ENCODE measurements at regions of chr12 and their contacts with region 1.

Region 1: GRCh38 chr12:31959161-31959700 is at the start of gene RESF1:
- DNase-seq: peak; percentile 82
- ATAC-seq: peak; percentile 87
- H3K4me3 Mint-ChIP-seq: peak within 1 kb of the TSS; percentile 99
- H3K27ac Mint-ChIP-seq: peak within 1 kb of the TSS; percentile 99
- H3K4me1 Mint-ChIP-seq: peaks cover 76% of the 10 kb centered on the region
- H3K27me3 Mint-ChIP-seq: no peaks in the 10 kb centered on the region
- CTCF ChIP-seq: no peak
- total RNA-seq, gene RESF1: 286 and 299 TPM in 2 replicates

Region 2: DNA sequence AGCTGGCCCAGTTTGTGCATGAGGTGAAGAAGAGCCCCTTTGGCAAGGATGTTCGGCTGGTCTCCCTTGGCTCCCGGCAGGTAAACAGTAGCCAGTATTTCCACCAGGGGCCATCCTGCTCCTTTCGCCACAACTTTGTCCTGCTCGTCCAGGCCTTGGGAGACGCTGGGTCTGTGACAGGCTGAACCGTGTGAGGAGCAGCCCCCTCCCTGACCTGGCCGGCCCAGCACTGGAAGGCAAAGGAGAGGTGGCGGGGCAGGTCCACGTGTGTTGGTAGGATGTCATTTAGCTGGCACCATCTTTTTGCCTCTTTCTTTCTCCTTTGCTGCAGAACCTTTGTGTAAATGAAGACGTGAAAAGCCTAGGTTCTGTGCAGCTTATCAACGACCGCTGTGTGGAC is 870.2 kb before region 1 on chr12:
- CTCF ChIA-PET with region 1: no interaction called
- POLR2A ChIA-PET with region 1: no interaction called
- intact Hi-C with region 1: no loop called
- DNase-seq: no peak
- ATAC-seq: no peak
- H3K4me3 Mint-ChIP-seq: no peak overlapping the region
- H3K27ac Mint-ChIP-seq: no peak overlapping the region
- H3K4me1 Mint-ChIP-seq: no peaks in the 10 kb centered on the region
- H3K27me3 Mint-ChIP-seq: no peaks in the 10 kb centered on the region
- CTCF ChIP-seq: no peak

Region 3: DNA sequence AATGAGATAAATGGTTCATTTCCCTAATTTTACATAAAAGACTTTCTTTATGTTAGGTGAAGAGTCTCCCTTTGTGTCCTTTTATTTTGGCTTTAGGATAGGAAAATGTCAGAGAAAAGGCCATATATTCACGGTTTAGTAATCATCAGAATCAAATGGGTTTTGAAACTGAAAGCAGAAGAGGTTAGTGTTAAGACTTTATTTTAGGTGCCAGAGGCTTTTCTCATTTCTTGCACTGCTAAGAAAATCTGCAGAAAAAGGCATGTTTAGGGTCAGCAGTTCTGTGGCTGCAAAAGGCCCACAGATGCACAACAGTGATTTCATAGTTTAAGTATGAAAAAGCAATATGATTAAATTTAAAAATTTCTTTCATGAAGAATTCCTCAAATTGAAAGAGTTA is 552.9 kb before region 1 on chr12:
- CTCF ChIA-PET with region 1: no interaction called
- POLR2A ChIA-PET with region 1: no interaction called
- intact Hi-C with region 1: loop called (anchors 1 kb)
- DNase-seq: no peak
- ATAC-seq: peak; percentile 39
- H3K4me3 Mint-ChIP-seq: peak overlapping the region; percentile 65
- H3K27ac Mint-ChIP-seq: peak overlapping the region; percentile 77
- H3K4me1 Mint-ChIP-seq: peaks cover 33% of the 10 kb centered on the region
- H3K27me3 Mint-ChIP-seq: no peaks in the 10 kb centered on the region
- CTCF ChIP-seq: no peak

Region 4: DNA sequence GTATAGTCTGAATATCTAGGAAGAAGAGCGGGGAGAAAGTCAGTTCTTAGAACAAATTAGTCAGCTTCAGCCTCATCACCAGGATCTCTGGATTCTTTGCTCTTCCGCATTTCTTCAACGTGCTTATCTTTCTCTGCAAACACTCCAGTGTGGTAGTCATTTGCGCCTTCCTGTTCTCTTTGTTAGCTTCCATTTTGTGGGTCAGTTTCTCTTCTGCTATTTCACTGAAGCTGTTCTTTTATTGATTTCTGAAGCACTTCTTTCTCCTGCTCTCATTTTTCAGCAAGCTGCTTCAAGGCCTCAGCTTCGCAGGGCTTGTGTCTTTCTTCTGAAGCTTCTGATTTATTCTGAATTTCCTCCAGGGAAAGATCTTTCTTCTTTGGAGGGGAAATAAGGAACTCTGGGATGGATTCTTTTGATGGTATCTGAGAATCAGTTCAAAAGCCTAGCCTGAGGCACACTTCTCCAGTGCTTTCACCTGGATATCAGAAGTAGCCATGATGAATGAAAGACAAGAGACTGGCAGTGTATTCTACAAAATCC is 243.9 kb before region 1 on chr12:
- CTCF ChIA-PET with region 1: interaction called, 3 read pairs
- POLR2A ChIA-PET with region 1: interaction called, 24 read pairs
- intact Hi-C with region 1: loop called (anchors 1 kb)
- DNase-seq: no peak
- ATAC-seq: peak; percentile 93
- H3K4me3 Mint-ChIP-seq: peak overlapping the region; percentile 32
- H3K27ac Mint-ChIP-seq: peak overlapping the region; percentile 85
- H3K4me1 Mint-ChIP-seq: peaks cover 58% of the 10 kb centered on the region
- H3K27me3 Mint-ChIP-seq: no peaks in the 10 kb centered on the region
- CTCF ChIP-seq: no peak

Region 5: DNA sequence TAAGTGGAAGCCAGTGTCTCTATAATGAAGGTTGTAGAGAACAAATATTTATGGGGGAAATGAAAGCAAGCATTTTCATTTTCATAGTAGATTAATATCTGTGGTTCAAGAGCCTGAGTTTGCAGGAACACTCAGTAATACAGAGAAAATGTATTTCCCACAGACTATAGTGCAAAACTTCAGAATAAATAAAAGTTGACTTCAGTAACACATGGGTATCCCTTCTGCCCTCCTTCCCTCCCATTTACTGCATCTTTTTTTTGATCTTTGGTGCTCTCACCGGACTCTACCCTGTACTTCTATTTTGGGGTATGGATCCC is 155.1 kb before region 1 on chr12:
- CTCF ChIA-PET with region 1: interaction called, 3 read pairs
- POLR2A ChIA-PET with region 1: interaction called, 92 read pairs
- intact Hi-C with region 1: loop called (anchors 1 kb)
- DNase-seq: no peak
- ATAC-seq: no peak
- H3K4me3 Mint-ChIP-seq: peak overlapping the region; percentile 78
- H3K27ac Mint-ChIP-seq: peak overlapping the region; percentile 88
- H3K4me1 Mint-ChIP-seq: peaks cover 50% of the 10 kb centered on the region
- H3K27me3 Mint-ChIP-seq: no peaks in the 10 kb centered on the region
- CTCF ChIP-seq: no peak

Region 6: GRCh38 chr12:31874961-31875608 is 84.1 kb before region 1 on chr12:
- CTCF ChIA-PET with region 1: interaction called, 4 read pairs
- POLR2A ChIA-PET with region 1: interaction called, 68 read pairs
- intact Hi-C with region 1: loop called (anchors 1 kb)
- DNase-seq: peak; percentile 45
- ATAC-seq: peak; percentile 85
- H3K4me3 Mint-ChIP-seq: peak overlapping the region; percentile 77
- H3K27ac Mint-ChIP-seq: peak overlapping the region; percentile 100
- H3K4me1 Mint-ChIP-seq: peaks cover 77% of the 10 kb centered on the region
- H3K27me3 Mint-ChIP-seq: no peaks in the 10 kb centered on the region
- CTCF ChIP-seq: no peak

Region 7: GRCh38 chr12:31928246-31929026 is 30.8 kb before region 1 on chr12:
- CTCF ChIA-PET with region 1: no interaction called
- POLR2A ChIA-PET with region 1: interaction called, 14 read pairs
- intact Hi-C with region 1: no loop called
- DNase-seq: no peak
- ATAC-seq: peak; percentile 49
- H3K4me3 Mint-ChIP-seq: peak overlapping the region; percentile 83
- H3K27ac Mint-ChIP-seq: peak overlapping the region; percentile 92
- H3K4me1 Mint-ChIP-seq: peaks cover 36% of the 10 kb centered on the region
- H3K27me3 Mint-ChIP-seq: no peaks in the 10 kb centered on the region
- CTCF ChIP-seq: no peak